ENCODE measurements at regions of chr9 and their contacts with region 1.

Region 1: DNA sequence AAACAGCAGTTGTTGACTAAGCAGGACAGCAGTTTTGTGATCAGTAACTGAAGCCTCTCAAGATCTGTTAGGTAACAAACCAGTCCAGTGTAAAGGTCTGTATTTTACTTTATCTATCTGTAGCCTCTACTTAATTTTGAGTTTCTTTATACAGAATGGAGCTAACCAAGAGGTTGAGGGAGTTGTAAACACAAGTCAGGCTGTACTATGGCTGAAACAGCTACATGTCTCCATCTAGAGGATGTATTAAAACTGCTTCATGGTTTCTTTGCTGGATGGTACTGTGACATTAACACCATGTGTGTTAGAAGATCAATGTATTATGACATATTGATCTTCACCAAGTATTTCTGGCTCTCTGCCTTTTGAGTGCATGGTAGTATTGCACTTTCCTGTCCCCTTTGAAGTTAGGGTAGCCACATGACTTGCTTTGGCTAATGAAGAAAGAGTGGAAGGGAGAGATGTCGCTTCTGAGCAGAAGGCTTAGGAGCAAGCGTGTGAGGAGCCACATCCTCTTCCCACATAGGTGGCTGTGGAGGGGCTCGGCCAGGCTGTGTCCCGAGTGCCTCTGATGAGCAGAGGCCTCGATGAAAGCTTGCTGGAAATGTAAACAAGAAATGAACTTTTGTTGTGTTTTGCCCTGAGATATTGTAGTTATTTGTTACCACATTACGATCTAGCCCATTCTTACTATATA is 105.6 kb upstream of the PCA3 start:
- DNase-seq: peak; percentile 44
- H3K4me3 ChIP-seq: no peak overlapping the region
- H3K27ac ChIP-seq: no peak overlapping the region
- H3K27me3 ChIP-seq: no peaks in the 10 kb centered on the region
- CTCF ChIP-seq: peak; percentile 61

Region 2: GRCh38 chr9:76458903-76459690 is 199.6 kb before region 1 on chr9 and contains the start of gene GCNT1:
- in situ Hi-C with region 1: loop called (anchors 25 kb)
- DNase-seq: peak; percentile 51
- H3K4me3 ChIP-seq: peak within 1 kb of the TSS; percentile 88
- H3K27ac ChIP-seq: peak within 1 kb of the TSS; percentile 6
- H3K27me3 ChIP-seq: no peaks in the 10 kb centered on the region
- CTCF ChIP-seq: peak; percentile 49

Measured in brain microvascular endothelial cell (primary cell).